Activated T-helper 2 cell treated with anti-CD3 and anti-CD28 coated beads, Interferon-gamma antibody, Interleukin-2, Interleukin-4, amounts not matched to agents 10 μg/mL and 5 μg/mL and 100 μg/mL, durations not matched to agents 14 hours and 24 hours and 36 hours (primary cell): ENCODE measurements at regions of chr15 and their contacts with region 1.

Region 1: GRCh38 chr15:55742927-55743728 is at the start of gene PRTG:
- DNase-seq: no peak
- H3K4me3 Mint-ChIP-seq: peak within 1 kb of the TSS; percentile 74
- H3K27ac Mint-ChIP-seq: no peak within 1 kb of the TSS
- H3K4me1 Mint-ChIP-seq: peaks cover 4% of the 10 kb centered on the region
- H3K27me3 Mint-ChIP-seq: peaks cover 35% of the 10 kb centered on the region
- total RNA-seq, gene PRTG: 0.66 and 0.83 TPM in 2 replicates

Region 2: DNA sequence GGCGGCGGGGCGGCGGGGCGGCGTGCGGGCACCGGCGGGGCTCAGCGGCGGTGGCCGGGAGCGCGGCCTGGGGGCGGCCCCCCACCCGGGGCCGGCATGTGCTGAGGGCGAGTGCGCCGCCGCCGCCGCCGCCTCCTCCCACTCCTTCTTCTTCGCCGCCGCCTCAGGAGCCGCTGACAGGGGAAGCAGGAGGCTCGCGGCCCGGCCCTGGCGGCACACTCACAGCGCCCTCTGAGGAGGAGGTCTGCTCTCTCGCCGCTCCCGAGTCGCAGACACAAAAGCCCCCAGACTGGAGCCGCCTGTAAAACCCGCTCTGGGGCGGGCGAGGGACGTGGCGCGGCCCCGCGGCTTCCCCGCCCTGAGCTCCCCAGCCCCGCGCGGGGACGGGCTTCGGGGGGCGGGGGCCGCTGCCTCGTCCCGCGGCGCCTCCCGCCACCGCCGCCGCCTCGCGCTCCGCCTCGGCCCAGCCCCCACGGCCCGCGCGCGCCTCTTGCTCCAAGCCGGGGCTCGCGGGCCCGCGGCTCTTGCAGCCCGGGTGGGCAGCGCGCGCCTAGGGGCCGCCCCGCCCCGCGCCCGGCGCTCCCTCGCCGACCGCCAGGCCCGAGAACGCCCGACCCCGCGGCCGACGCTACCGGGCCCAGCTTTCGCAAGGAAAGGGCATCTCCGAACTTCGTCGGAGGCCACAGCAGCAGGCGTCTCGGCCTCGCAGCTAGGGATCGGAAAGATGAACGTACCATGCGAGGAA is 154.9 kb before region 1 on chr15 and contains the start of gene PYGO1:
- intact Hi-C with region 1: loop called (anchors 5 kb)
- DNase-seq: peak; percentile 18
- H3K4me3 Mint-ChIP-seq: peak within 1 kb of the TSS; percentile 70
- H3K27ac Mint-ChIP-seq: no peak within 1 kb of the TSS
- H3K4me1 Mint-ChIP-seq: peaks cover 2% of the 10 kb centered on the region
- H3K27me3 Mint-ChIP-seq: peaks cover 48% of the 10 kb centered on the region
- total RNA-seq, gene PYGO1: 0.02 and 0.11 TPM in 2 replicates

Region 3: GRCh38 chr15:55654561-55655031 is 88.5 kb before region 1 on chr15:
- intact Hi-C with region 1: loop called (anchors 5 kb)
- DNase-seq: no peak
- H3K4me3 Mint-ChIP-seq: no peak overlapping the region
- H3K27ac Mint-ChIP-seq: no peak overlapping the region
- H3K4me1 Mint-ChIP-seq: peaks cover 25% of the 10 kb centered on the region
- H3K27me3 Mint-ChIP-seq: no peaks in the 10 kb centered on the region

Region 4: DNA sequence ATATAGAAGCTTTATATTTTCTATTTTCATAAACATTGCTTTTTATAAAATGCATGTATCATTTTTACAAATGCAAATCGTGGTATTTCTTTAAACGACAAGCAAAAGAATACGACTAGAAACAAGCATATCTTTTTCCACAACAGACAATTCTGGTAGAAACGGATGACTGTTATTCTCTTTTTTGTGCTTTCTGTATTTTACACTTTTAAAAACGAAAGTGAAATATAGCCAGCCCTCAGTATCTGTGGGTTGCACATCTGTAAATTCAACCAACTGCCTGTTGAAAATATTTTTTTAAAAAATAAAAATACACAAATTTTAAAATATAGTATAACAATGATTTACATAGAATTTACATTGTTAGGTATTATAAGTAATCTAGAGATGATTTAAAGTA is 61.5 kb before region 1 on chr15:
- intact Hi-C with region 1: loop called (anchors 2 kb)
- DNase-seq: no peak
- H3K4me3 Mint-ChIP-seq: no peak overlapping the region
- H3K27ac Mint-ChIP-seq: no peak overlapping the region
- H3K4me1 Mint-ChIP-seq: peaks cover 9% of the 10 kb centered on the region
- H3K27me3 Mint-ChIP-seq: peaks cover 2% of the 10 kb centered on the region